Head of caudate nucleus (tissue), 42 donors: ENCODE measurements at regions of chr14 and their contacts with region 1.

Region 1: GRCh38 chr14:100108042-100108825 is 43.0 kb downstream of the EVL start:
- DNase-seq: peak; percentile 62 to 94 (median 86)

Region 2: DNA sequence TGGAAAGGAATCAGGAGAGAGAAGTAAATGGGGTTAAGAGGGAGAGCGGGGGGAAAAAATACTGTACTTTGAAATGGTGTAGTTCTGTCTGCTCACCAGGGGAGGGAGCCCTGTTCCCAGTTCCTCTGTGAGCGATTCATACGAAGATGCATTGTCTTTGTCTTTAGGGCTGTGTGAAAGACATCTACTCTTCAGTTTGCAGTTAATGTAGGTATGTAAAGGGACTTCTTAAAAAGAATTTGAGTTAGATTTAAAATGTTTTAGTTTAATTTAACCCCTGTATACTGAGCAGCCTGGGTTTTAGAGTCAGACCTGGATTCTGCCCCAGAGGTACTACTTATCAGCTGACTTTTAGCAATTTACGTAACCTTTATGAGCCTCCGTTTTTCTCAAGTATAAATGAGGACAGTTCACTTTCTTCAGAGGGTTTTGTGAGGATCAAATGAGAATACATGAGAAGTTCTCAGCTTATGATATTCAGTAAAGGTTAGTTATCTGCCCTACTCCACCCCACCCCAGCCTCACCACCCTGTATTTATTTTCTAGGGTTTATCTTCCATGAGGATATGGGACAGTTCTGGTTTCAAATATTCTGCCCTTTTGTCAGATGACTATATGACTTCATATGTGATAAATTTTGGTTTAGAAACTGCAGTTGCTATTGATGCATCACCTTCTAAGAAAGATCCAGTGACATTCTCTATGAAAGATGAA is 125.5 kb before region 1 on chr14:
- intact Hi-C with region 1: loop called (anchors 10 kb)
- DNase-seq: peak in 39 of 42 donors; percentile 15 to 88 (median 71)

Region 3: DNA sequence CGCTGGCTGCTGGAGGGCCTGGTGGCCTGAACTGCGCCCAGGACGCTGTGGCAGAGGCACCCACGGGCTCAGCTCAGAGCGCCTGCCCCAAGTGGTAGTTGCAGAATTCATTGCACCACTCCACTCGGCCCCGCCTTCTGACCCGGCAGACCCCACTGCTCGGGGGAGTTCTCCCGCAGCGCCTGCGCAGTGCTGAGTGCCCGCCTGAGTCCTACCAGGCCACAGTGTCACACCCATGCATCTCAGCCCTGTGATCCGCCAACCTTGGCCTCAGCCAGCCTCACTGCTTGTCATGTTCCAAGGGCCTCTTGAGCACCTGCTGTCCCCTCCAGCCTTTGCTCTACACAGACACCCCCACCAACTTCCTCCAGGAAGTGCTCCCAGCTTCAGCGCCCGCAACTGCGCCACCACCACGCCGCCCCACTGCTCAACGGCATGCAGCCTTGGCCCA is 39.0 kb after region 1 on chr14:
- intact Hi-C with region 1: no loop called
- DNase-seq: peak in 9 of 42 donors; percentile 26 to 52 (median 38)

Region 4: GRCh38 chr14:100192672-100193416 is 84.6 kb after region 1 on chr14:
- intact Hi-C with region 1: loop called (anchors 10 kb)
- DNase-seq: peak; percentile 98 to 100 (median 99)